A673 (cell line): ENCODE measurements at regions of chr10 and their contacts with region 1.

Region 1: GRCh38 chr10:116761883-116762282 is 19.5 kb upstream of the HSPA12A start:
- DNase-seq: no peak
- H3K4me3 ChIP-seq: no peak overlapping the region
- H3K27ac ChIP-seq: no peak overlapping the region
- H3K4me1 ChIP-seq: no peaks in the 10 kb centered on the region
- H3K27me3 ChIP-seq: peaks cover 6% of the 10 kb centered on the region
- CTCF ChIP-seq: no peak

Region 2: GRCh38 chr10:116548301-116548700 is 213.6 kb before region 1 on chr10:
- CTCF ChIA-PET with region 1: no interaction called
- POLR2A ChIA-PET with region 1: no interaction called
- intact Hi-C with region 1: no loop called
- DNase-seq: no peak
- H3K4me3 ChIP-seq: no peak overlapping the region
- H3K27ac ChIP-seq: no peak overlapping the region
- H3K4me1 ChIP-seq: no peaks in the 10 kb centered on the region
- H3K27me3 ChIP-seq: peaks cover 6% of the 10 kb centered on the region
- CTCF ChIP-seq: no peak

Region 3: DNA sequence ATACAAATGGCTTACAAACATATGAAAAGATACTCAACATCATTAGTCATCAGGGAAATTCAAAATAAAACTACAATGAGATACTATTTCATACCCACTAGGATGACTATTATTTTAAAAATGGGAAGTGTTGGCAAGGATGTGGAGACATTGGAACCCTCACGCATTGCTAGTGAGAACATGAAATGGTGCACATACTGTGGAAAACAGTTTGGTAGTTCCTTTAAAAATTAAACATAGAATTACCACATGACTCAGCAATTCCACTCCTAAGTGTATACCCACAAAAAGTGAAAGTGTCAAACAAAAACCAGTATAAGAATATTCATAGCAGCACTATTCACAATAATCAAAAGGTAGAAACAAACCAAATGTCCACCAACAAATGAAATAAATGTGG is 291.6 kb after region 1 on chr10:
- CTCF ChIA-PET with region 1: no interaction called
- POLR2A ChIA-PET with region 1: no interaction called
- intact Hi-C with region 1: no loop called
- DNase-seq: no peak
- H3K4me3 ChIP-seq: no peak overlapping the region
- H3K27ac ChIP-seq: no peak overlapping the region
- H3K4me1 ChIP-seq: no peaks in the 10 kb centered on the region
- H3K27me3 ChIP-seq: no peaks in the 10 kb centered on the region
- CTCF ChIP-seq: no peak

Region 4: DNA sequence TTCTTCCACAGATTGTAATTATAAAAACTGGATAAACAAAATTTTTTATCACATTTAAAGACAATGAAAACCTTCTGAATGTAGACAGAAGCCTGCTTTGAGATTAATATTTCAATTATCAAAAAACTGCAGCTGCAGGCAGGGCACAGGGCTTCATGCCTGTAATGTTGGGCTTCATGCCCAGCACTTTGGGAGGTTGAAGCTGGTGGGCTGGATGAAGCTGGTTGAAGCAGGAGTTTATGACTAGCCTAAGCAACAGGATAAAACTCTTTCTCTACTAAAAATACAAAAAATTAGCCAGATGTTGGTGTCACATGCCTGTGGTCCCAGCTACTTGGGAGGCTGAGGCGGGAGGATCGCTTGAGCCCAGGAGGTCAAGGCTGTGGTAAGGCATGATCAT is 572.2 kb after region 1 on chr10:
- CTCF ChIA-PET with region 1: no interaction called
- POLR2A ChIA-PET with region 1: interaction called, 10 read pairs
- intact Hi-C with region 1: no loop called
- DNase-seq: no peak
- H3K4me3 ChIP-seq: no peak overlapping the region
- H3K27ac ChIP-seq: no peak overlapping the region
- H3K4me1 ChIP-seq: no peaks in the 10 kb centered on the region
- H3K27me3 ChIP-seq: no peaks in the 10 kb centered on the region
- CTCF ChIP-seq: no peak